HCT116 (cell line): ENCODE measurements at regions of chr18 and their contacts with region 1.

Region 1: GRCh38 chr18:35236571-35237363 is 4.1 kb upstream of the ZNF397 start:
- DNase-seq: no peak
- ATAC-seq: no peak
- H3K4me3 ChIP-seq: no peak overlapping the region
- H3K27ac ChIP-seq: no peak overlapping the region
- H3K4me1 ChIP-seq: peaks cover 4 to 6% of the 10 kb centered on the region in 2 experiments; a peak in 3 of 4 replicates
- H3K27me3 ChIP-seq: no peaks in the 10 kb centered on the region
- CTCF ChIP-seq: no peak
- POLR2A ChIP-seq: no peak
- RAD21 ChIP-seq: no peak

Region 2: DNA sequence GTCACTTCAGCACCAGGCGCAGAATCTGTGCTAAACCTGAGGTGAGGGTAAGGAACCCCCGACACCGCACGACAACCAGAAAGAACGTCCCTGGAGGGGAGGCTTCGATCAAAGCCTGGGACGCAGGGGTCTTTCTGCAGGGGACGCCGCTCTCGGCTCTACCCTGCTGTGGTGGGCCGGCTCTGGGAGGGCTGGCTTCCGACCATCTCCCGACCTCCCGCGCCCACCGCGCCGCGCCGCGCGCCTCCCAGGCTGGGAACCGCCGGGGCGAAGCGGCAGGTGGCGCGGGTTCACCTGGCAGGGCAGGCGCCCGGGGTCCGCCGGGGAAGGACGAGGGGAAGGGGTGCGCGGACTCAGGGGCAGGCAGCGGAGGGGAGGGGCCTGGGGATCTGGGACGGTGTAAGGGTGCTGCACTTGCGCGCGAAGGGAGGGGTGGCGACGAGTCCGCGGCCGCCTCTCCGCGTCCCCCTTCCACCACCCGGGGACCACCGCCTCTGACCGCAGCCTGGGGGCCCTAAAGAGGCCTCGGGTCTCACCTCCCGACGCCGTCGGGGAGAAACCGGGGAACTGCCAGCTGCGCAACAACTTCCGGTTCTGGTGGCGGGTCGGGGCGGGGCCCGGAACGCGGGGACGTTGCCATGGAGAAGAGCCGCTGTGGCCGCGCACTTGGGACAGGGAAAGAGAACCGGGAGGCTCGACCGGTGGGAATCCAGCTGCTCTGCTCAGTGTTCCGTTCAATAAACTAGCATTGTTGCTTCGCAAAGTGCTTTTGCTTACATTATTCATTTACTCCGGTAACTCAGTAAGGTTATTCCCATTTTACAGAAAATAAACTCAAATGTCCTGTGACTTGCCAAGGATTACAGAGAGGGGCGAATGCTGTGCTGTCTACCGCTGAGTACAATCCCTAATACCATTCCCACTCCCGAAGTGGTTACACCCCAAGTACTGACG is 140.3 kb after region 1 on chr18 and contains the start of gene ZNF396:
- CTCF ChIA-PET with region 1: no interaction called
- POLR2A ChIA-PET with region 1: no interaction called
- RAD21 ChIA-PET with region 1: interaction called in 1 of 2 experiments, 5 read pairs
- intact Hi-C with region 1: loop called (anchors 5 kb)
- DNase-seq: peak; percentile 23
- ATAC-seq: peak; percentile 96
- H3K4me3 ChIP-seq: peak within 1 kb of the TSS; percentile 52 to 64
- H3K27ac ChIP-seq: no peak within 1 kb of the TSS; the same call in 1 of the 2 replicates
- H3K4me1 ChIP-seq: peaks cover 6 to 16% of the 10 kb centered on the region in 2 experiments; a peak in 3 of 4 replicates
- H3K27me3 ChIP-seq: no peaks in the 10 kb centered on the region
- CTCF ChIP-seq: no peak
- POLR2A ChIP-seq: no peak
- RAD21 ChIP-seq: no peak
- total RNA-seq, gene ZNF396: 1.3 TPM